Heart right ventricle (tissue), 16 donors: ENCODE measurements at regions of chr4 and their contacts with region 1.

Region 1: DNA sequence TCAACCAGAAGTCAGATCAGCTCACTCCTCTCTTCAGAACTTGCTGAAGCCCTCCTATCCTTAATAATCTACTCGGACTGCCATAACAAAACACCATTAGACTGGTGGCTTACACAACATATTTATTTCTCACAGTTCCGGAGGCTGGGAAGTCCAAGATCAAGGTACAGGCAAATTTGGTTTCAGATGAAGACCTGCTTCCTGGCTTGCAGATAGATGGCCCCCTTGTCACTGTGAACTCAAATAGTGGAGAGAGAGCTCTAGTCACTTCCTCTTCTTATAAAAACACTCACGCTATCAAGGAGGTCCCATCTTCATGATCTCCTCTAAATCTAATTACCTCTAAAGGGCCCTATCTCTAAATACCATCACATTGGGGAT is 125.1 kb downstream of the CAMK2D start:
- DNase-seq: no peak
- ATAC-seq: peak in 7 of 8 donors; percentile 2 to 31 (median 11)
- H3K4me3 ChIP-seq: no peak overlapping the region
- H3K27ac ChIP-seq: peak overlapping the region; percentile 29 to 91 (median 80)
- H3K4me1 ChIP-seq: peaks cover 4 to 97% (median 75%) of the 10 kb centered on the region in 9 donors
- H3K27me3 ChIP-seq: no peaks in the 10 kb centered on the region
- CTCF ChIP-seq: peak in 4 of 9 donors; percentile 15 to 40 (median 36)

Region 2: GRCh38 chr4:113547487-113548042 is 88.9 kb before region 1 on chr4:
- intact Hi-C with region 1: loop called in 2 of 10 experiments (anchors 5 to 10 kb)
- DNase-seq: peak; percentile 74 to 88
- ATAC-seq: peak; percentile 93 to 99 (median 98)
- H3K4me3 ChIP-seq: no peak overlapping the region
- H3K27ac ChIP-seq: peak overlapping the region in 9 of 10 donors; percentile 20 to 74 (median 47)
- H3K4me1 ChIP-seq: peaks cover 0 to 22% (median 13%) of the 10 kb centered on the region in 9 donors
- H3K27me3 ChIP-seq: no peaks in the 10 kb centered on the region
- CTCF ChIP-seq: peak; percentile 87 to 99 (median 98)

Region 3: GRCh38 chr4:113584407-113585150 is 51.8 kb before region 1 on chr4:
- intact Hi-C with region 1: loop called in 2 of 10 experiments (anchors 2 to 10 kb)
- DNase-seq: no peak
- ATAC-seq: peak in 7 of 8 donors; percentile 29 to 66 (median 43)
- H3K4me3 ChIP-seq: no peak overlapping the region
- H3K27ac ChIP-seq: peak overlapping the region; percentile 14 to 85 (median 77)
- H3K4me1 ChIP-seq: peaks cover 0 to 67% (median 50%) of the 10 kb centered on the region in 9 donors
- H3K27me3 ChIP-seq: no peaks in the 10 kb centered on the region
- CTCF ChIP-seq: no peak

Region 4: DNA sequence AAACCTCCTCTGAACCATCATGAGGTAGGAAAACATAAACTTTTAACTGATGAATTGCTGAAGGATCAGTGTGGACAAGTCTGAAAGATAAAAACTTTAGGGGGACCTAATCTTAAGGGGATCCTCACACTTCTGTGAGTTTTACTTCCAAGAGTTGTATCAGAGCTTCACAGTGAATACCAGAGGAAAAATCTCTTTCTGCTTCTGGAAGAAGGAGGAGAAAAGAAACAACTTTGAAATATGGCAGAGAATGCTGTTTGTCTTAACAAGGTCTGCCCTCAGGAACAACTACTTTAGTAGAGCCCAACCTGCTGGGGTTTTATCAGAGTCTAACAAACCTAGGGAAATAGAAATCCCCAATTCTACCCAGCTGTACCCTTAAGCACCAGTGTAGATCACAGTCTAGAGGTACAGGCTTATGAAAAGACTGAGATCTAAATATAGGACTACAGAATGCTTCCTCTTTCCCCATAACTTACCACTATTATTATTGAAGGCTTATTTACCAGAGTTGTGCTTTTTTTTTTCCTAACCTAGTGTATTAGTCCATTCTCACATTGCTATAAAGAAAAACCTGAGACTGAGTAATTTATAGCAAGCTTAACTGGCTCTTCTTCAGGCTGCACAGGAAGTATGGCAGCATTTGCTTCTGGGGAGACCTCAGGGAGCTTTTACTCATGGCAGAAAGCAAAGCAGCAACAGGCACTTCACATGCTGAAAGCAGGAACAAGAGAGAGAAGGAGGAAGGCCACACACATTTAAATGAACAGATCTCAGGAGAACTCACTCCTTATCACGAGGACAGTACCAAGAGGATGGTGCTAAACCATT is 42.8 kb before region 1 on chr4:
- intact Hi-C with region 1: loop called in 2 of 10 experiments (anchors 5 to 10 kb)
- DNase-seq: no peak
- ATAC-seq: peak in 3 of 8 donors; percentile 32 to 50 (median 40)
- H3K4me3 ChIP-seq: no peak overlapping the region
- H3K27ac ChIP-seq: peak overlapping the region in 7 of 10 donors; percentile 18 to 63 (median 39)
- H3K4me1 ChIP-seq: peaks cover 0 to 39% (median 22%) of the 10 kb centered on the region in 9 donors
- H3K27me3 ChIP-seq: no peaks in the 10 kb centered on the region
- CTCF ChIP-seq: no peak

Region 5: GRCh38 chr4:113673450-113673849 is 37.0 kb after region 1 on chr4:
- intact Hi-C with region 1: loop called in 1 of 10 experiments (anchors 5 kb)
- DNase-seq: no peak
- ATAC-seq: peak in 4 of 8 donors; percentile 33 to 70 (median 50)
- H3K4me3 ChIP-seq: no peak overlapping the region
- H3K27ac ChIP-seq: peak overlapping the region in 3 of 10 donors; percentile 0 to 21 (median 12)
- H3K4me1 ChIP-seq: peaks cover 0 to 70% (median 54%) of the 10 kb centered on the region in 9 donors
- H3K27me3 ChIP-seq: no peaks in the 10 kb centered on the region
- CTCF ChIP-seq: no peak

Region 6: DNA sequence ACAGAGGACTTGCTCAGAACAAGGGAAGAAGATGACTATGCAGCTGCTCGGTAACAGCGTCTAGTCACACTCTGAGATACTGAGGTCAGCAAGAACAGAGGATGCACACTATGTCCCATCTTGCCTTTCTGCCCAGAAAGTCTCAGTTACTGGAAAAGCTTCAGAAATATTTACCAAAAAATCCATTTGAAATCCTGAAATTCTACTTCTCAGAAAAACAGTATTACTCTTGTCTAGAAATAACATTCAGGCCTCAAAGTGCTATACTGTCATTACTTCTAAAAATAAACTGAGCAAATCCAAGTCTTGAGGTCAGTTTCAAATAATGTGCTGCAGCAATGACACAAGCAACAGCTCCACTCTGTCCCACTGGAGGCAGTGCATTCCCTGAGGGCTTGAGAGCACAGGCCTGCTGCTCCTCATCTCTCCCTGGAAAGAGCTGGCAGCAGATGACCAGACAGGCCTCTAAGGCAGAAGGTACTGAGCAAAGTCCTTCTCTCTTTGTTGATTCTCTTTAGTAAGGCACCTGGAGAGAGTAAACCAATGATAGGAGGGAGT is 48.2 kb after region 1 on chr4:
- intact Hi-C with region 1: loop called in 2 of 10 experiments (anchors 5 kb)
- DNase-seq: peak; percentile 54 to 85
- ATAC-seq: peak; percentile 93 to 98 (median 94)
- H3K4me3 ChIP-seq: no peak overlapping the region
- H3K27ac ChIP-seq: peak overlapping the region; percentile 36 to 86 (median 74)
- H3K4me1 ChIP-seq: peaks cover 0 to 75% (median 52%) of the 10 kb centered on the region in 9 donors
- H3K27me3 ChIP-seq: no peaks in the 10 kb centered on the region
- CTCF ChIP-seq: peak in 8 of 9 donors; percentile 16 to 62 (median 44)

Region 7: GRCh38 chr4:113756005-113756410 is 119.6 kb after region 1 on chr4:
- intact Hi-C with region 1: loop called in 5 of 10 experiments (anchors 5 to 10 kb)
- DNase-seq: no peak
- ATAC-seq: no peak
- H3K4me3 ChIP-seq: no peak overlapping the region
- H3K27ac ChIP-seq: peak overlapping the region in 1 of 10 donors; percentile 0
- H3K4me1 ChIP-seq: peaks cover 0 to 70% (median 61%) of the 10 kb centered on the region in 9 donors
- H3K27me3 ChIP-seq: no peaks in the 10 kb centered on the region
- CTCF ChIP-seq: no peak

Region 8: DNA sequence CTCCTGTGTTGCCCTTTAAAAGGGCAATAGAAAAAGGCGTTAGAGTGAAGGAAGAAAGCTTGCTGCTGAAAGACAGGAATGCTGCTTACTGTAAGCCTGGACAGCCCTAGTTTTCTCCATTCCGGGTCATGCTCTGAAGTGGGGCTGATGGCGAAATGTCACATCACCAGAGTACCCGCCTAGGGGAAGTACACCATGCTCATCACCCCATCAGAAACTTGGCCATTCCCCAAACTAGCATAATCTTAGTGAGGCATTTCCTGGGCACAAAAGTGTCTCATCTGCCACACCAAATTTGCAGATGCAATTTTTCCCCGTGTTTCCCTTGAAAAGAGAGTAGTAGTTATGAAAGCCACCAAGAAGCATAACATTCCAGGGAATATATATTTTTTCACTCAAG is 172.9 kb after region 1 on chr4:
- intact Hi-C with region 1: no loop called
- DNase-seq: peak; percentile 10 to 14
- ATAC-seq: peak in 5 of 8 donors; percentile 24 to 81 (median 55)
- H3K4me3 ChIP-seq: no peak overlapping the region
- H3K27ac ChIP-seq: peak overlapping the region in 1 of 10 donors; percentile 1
- H3K4me1 ChIP-seq: peaks cover 0 to 17% (median 0%) of the 10 kb centered on the region in 9 donors
- H3K27me3 ChIP-seq: no peaks in the 10 kb centered on the region
- CTCF ChIP-seq: no peak

Region 9: GRCh38 chr4:113823291-113823659 is 186.8 kb after region 1 on chr4:
- intact Hi-C with region 1: no loop called
- DNase-seq: no peak
- ATAC-seq: no peak
- H3K4me3 ChIP-seq: no peak overlapping the region
- H3K27ac ChIP-seq: no peak overlapping the region
- H3K4me1 ChIP-seq: peaks cover 0 to 47% (median 16%) of the 10 kb centered on the region in 9 donors
- H3K27me3 ChIP-seq: no peaks in the 10 kb centered on the region
- CTCF ChIP-seq: no peak